HCT116 (cell line): ENCODE measurements at regions of chr15 and their contacts with region 1.

Region 1: DNA sequence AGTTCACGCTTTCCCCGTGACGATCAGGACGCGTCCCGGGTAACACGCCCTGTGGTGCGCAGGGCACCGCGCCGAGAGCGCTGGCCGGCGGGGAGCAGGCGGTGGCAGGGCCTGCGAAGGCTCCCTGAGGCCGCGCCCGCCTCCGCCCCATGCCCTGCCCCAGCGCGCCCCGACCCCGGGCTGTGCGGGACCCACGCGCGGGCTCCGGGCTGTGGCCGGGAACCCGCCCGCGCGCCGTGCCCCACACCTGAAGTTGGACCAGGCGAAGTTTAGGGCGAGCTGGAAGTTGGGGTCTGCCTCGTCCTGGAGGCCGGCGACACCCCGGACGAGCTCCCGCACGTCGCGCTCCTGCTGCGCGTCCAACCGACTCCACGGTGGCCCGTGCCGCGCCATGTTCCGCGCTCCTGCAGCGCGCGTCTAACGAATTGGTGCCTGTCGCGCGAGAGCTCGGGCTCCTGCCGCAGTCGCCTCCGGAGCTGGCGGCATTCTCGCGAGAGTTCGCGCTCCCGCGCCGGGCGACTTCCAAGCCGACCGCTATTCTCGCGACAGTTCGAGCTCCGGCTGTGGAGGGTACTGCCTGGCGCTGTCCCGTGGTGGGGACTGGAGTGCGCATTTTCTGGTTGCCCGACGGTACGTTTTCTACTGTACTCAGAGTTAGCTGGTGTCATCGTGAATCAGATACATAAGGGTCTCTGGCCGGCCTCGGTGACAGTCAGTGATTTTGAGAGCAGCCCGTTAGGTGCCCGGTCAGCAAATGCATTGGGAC is at the start of gene TUBGCP5:
- DNase-seq: peak; percentile 96
- ATAC-seq: peak; percentile 96
- H3K4me3 ChIP-seq: peak within 1 kb of the TSS; percentile 84 to 92
- H3K27ac ChIP-seq: peak within 1 kb of the TSS; percentile 89
- H3K4me1 ChIP-seq: peaks cover 4 to 18% of the 10 kb centered on the region in 2 experiments
- H3K27me3 ChIP-seq: no peaks in the 10 kb centered on the region
- CTCF ChIP-seq: peak in 2 of 3 experiments; percentile 27 to 31; a peak in 1 of 6 replicates
- POLR2A ChIP-seq: peak; percentile 96
- RAD21 ChIP-seq: no peak
- total RNA-seq, gene TUBGCP5: 17.9 TPM

Region 2: DNA sequence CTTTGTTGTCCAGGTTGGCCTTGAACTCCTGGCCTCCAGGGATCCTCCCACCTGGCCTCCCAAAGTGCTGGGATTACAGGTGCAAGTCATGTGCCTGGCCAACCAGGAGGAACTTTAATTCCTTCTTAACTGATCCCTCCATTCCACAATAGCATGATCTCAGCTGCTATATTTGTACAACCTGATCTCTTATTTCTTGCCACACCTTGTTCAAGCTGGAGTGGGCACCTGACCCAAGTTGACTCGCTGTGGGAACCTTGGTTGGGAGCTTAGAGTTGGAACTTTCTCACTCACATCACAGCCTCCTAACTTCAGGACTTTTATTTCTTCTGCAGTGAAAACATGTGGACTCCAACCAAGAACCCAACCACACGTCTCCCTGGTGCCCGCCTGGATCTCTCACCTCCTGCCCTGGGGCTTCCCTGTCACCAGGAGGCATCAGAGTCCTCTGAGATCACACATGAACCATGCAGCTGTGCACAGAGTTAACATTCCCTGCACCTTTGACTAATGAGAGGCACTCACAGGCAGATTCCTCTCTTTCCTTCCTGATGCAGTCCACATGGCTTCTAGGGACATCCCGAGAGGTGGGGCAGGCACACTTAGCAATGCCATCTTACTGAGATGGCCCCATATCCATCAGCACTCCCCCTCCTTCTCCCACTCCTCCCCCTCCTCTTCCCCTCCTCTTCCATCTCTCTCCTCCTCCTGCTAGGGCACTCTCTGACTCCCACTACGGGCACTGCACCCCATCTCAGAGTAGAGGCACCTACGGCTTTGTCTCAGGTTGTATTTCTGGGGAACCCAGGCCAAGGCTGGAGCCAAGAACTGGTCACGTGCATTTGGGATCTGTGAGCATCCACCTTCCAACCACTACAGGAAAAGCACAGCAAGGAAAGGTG is 49.5 kb before region 1 on chr15:
- CTCF ChIA-PET with region 1: no interaction called
- POLR2A ChIA-PET with region 1: no interaction called
- RAD21 ChIA-PET with region 1: no interaction called
- intact Hi-C with region 1: no loop called
- DNase-seq: no peak
- ATAC-seq: 0 out of 2 replicates have a peak, but pooled peaks have one; percentile 54
- H3K4me3 ChIP-seq: no peak overlapping the region
- H3K27ac ChIP-seq: no peak overlapping the region
- H3K4me1 ChIP-seq: no peaks in the 10 kb centered on the region
- H3K27me3 ChIP-seq: no peaks in the 10 kb centered on the region
- CTCF ChIP-seq: 0 out of 6 replicates have a peak, but pooled peaks of 1 of the 3 experiments have one; percentile 9
- POLR2A ChIP-seq: no peak
- RAD21 ChIP-seq: 0 out of 2 replicates have a peak, but pooled peaks have one; percentile 16

Region 3: DNA sequence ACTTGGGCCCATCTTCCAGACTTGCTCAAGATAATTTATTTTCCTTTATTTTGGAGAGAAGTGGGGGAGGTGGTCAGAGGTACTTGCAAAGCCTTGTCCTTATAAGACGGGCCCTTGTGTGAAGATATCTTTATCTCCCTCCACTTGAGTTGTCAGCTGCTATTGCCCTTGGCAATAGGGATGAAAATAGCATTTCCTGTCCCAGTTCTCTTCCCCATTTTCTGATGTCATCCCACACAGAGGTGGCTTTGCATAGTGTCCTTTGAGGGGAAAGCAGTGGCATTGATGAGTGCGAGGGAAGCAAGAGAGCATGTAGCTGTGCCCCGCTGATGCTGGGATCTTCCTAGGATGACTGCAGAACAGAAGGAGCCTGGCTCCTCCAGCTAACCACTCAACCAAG is 41.9 kb after region 1 on chr15:
- CTCF ChIA-PET with region 1: no interaction called
- POLR2A ChIA-PET with region 1: no interaction called
- RAD21 ChIA-PET with region 1: no interaction called
- intact Hi-C with region 1: loop called (anchors 2 kb)
- DNase-seq: no peak
- ATAC-seq: no peak
- H3K4me3 ChIP-seq: no peak overlapping the region
- H3K27ac ChIP-seq: no peak overlapping the region
- H3K4me1 ChIP-seq: no peaks in the 10 kb centered on the region
- H3K27me3 ChIP-seq: no peaks in the 10 kb centered on the region
- CTCF ChIP-seq: no peak
- POLR2A ChIP-seq: no peak
- RAD21 ChIP-seq: no peak

Region 4: GRCh38 chr15:23467110-23467600 is 427.8 kb after region 1 on chr15:
- CTCF ChIA-PET with region 1: interaction called, 3 read pairs
- POLR2A ChIA-PET with region 1: no interaction called
- RAD21 ChIA-PET with region 1: no interaction called
- intact Hi-C with region 1: loop called (anchors 5 kb)
- DNase-seq: peak; percentile 24
- ATAC-seq: peak; percentile 55; the same call in 1 of the 2 replicates
- H3K4me3 ChIP-seq: no peak overlapping the region
- H3K27ac ChIP-seq: no peak overlapping the region
- H3K4me1 ChIP-seq: no peaks in the 10 kb centered on the region
- H3K27me3 ChIP-seq: peaks cover 13% of the 10 kb centered on the region; the same call in 1 of the 2 replicates
- CTCF ChIP-seq: peak; percentile 25 to 62 (median 29); a peak in 4 of 6 replicates
- POLR2A ChIP-seq: no peak
- RAD21 ChIP-seq: peak; percentile 51